ENCODE measurements at regions of chr2 and their contacts with region 1.

Region 1: DNA sequence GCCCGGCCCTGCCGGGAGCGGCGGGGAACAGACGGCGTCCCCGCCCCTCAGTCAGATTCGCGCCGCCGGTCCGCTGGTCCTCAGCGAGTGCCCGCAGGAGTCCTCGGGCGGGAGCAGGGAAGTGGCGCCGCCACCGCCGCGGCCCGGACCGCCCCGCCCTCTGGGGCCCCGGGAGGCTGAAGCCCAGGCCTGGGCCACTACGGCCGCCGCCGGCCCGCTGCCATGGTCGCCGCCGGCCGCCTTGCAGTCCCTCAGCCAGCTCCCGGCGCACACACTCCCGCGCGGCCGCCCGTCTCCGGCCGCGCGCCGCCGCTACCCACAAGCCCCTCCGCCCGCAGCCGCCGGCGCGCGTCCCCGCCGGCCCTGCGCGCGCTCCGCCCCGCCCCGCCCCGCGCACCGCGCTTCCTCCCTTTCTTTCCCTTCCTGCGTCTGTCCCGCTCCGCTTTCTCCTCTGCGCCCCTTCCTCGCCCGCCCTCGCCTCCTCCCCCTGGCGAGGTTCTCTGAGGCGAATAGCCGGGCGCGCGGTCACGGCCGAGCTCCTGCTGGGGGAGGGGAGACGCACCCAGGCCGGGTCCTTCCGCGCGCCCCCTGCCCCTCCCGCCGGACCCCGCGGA is at the start of gene ROCK2:
- DNase-seq: peak; percentile 59
- H3K4me3 Mint-ChIP-seq: peak within 1 kb of the TSS; percentile 99
- H3K27ac Mint-ChIP-seq: peak within 1 kb of the TSS; percentile 91
- H3K4me1 Mint-ChIP-seq: peaks cover 23% of the 10 kb centered on the region
- H3K27me3 Mint-ChIP-seq: peaks cover 11% of the 10 kb centered on the region
- total RNA-seq, gene ROCK2: 20.6 and 21.1 TPM in 2 replicates

Region 2: GRCh38 chr2:10812362-10813162 is 531.9 kb before region 1 on chr2 and contains the start of gene PDIA6:
- intact Hi-C with region 1: loop called (anchors 5 kb)
- DNase-seq: peak; percentile 95
- H3K4me3 Mint-ChIP-seq: peak within 1 kb of the TSS; percentile 89
- H3K27ac Mint-ChIP-seq: peak within 1 kb of the TSS; percentile 92
- H3K4me1 Mint-ChIP-seq: peaks cover 33% of the 10 kb centered on the region
- H3K27me3 Mint-ChIP-seq: peaks cover 18% of the 10 kb centered on the region
- total RNA-seq, gene PDIA6: 210 and 211 TPM in 2 replicates

Region 3: DNA sequence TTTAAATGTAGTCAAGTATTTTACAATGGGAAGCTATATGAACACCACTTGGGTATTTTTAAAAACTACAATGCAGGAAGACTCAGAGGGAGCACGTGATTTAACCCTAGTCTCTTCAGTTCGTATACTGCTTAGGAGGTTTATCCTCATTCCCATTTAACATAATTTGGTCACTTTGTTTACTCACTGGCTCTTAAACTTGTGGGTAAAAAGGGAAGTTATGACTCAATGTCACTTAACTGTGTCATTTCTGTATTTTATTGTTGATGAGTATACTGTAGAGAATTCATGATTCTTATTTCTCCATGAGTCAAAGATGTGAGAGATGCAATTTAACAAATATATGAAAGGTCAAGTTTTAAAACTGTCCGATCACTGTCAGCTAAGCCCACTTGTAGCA is 141.0 kb before region 1 on chr2:
- intact Hi-C with region 1: loop called (anchors 5 kb)
- DNase-seq: no peak
- H3K4me3 Mint-ChIP-seq: no peak overlapping the region
- H3K27ac Mint-ChIP-seq: peak overlapping the region; percentile 55
- H3K4me1 Mint-ChIP-seq: peaks cover 19% of the 10 kb centered on the region
- H3K27me3 Mint-ChIP-seq: no peaks in the 10 kb centered on the region

Region 4: DNA sequence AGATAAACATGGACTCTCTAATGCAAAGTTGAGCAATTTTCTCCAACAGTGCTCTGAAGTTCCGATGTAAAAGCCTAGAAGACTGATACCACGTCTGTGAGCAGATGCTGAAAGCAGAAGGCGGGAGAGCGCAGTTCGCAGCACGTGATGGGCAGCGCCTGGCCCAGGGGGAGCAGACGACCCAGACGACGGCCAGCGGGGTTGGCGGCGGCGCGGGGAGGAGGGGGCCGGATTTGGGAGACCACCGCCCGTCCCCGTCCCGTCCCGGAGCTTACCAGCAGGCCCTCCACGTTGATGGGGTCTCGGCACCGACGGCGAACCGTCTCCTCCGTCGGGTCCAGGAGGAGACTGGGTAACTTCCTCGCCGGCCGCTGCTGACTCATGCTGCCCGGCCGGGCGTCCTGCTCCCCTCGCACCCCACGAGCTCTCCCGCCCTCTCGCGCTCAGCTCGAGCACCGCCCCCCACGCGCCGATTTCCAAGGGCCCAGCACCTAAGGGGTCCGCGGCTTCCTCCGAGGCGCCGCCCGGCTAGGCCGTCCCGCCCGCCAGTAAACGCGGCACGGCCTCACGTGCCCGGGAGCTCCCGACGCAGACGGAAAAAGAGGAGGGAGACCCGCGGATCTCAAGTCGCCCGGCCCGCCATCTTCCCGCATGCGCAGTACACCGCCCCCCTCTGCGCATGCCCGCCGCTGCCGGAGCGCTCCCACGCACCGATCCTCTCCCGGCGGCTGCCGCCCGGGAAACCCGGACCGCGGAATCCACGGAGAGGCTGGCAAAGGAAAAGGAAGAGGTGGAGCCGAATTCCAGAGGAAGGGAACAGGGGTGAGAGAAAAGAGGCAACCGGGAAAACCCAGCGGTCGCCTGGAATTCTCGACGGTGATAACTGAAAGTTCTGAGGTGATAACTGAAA is 121.3 kb after region 1 on chr2 and contains the start of gene E2F6:
- intact Hi-C with region 1: loop called (anchors 5 kb)
- DNase-seq: peak; percentile 80
- H3K4me3 Mint-ChIP-seq: peak within 1 kb of the TSS; percentile 96
- H3K27ac Mint-ChIP-seq: peak within 1 kb of the TSS; percentile 86
- H3K4me1 Mint-ChIP-seq: peaks cover 20% of the 10 kb centered on the region
- H3K27me3 Mint-ChIP-seq: no peaks in the 10 kb centered on the region
- total RNA-seq, gene E2F6: 16.8 and 18.2 TPM in 2 replicates

Region 5: GRCh38 chr2:12728221-12728777 is 1383.8 kb after region 1 on chr2:
- intact Hi-C with region 1: loop called (anchors 10 kb)
- DNase-seq: peak; percentile 75
- H3K4me3 Mint-ChIP-seq: peak overlapping the region; percentile 45
- H3K27ac Mint-ChIP-seq: peak overlapping the region; percentile 25
- H3K4me1 Mint-ChIP-seq: peaks cover 56% of the 10 kb centered on the region
- H3K27me3 Mint-ChIP-seq: no peaks in the 10 kb centered on the region

Measured in activated T-helper 2 cell treated with anti-CD3 and anti-CD28 coated beads, Interferon-gamma antibody, Interleukin-2, Interleukin-4, amounts not matched to agents 10 μg/mL and 5 μg/mL and 100 μg/mL, durations not matched to agents 14 hours and 24 hours and 36 hours (primary cell).